ENCODE measurements at regions of chr5 and their contacts with region 1.

Region 1: DNA sequence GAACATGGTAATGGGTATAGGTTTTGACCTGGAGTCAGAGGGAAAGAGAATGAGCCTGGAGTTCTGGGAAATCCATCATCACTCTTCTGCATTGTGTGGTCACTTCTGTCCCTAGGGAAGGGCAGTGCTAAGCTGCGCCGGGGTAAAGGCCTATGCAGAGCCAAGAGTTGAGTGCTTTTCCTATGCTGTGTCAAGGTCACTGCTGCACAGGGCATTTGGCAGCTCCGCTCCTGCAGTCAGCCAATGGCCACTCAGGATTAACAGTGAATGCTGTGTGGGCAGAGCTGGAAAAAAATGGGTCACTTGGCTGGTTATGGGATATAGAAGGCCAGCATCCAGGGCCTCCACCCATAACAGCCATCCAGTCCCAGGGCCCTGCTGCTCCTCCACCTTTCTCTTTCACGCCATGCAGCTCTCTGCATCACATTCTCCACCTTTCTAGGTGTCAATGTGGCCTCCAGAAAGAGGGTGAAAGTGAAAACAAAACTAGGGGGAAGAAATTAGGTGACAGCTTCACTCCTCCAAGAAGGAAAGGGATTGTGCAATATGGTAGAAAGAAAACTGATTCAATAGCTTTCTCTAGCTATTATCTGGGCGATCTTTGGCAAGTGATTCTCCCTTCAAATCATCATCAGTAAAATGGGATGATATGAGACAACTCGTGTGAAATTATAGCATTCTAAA is 279.3 kb upstream of the ANKRD55 start:
- DNase-seq: peak in 1 of 2 donors; percentile 76
- H3K4me3 ChIP-seq: no peak overlapping the region
- H3K27ac ChIP-seq: no peak overlapping the region
- H3K4me1 ChIP-seq: peaks cover 0 to 12% of the 10 kb centered on the region in 2 donors
- H3K27me3 ChIP-seq: no peaks in the 10 kb centered on the region
- CTCF ChIP-seq: no peak

Region 2: DNA sequence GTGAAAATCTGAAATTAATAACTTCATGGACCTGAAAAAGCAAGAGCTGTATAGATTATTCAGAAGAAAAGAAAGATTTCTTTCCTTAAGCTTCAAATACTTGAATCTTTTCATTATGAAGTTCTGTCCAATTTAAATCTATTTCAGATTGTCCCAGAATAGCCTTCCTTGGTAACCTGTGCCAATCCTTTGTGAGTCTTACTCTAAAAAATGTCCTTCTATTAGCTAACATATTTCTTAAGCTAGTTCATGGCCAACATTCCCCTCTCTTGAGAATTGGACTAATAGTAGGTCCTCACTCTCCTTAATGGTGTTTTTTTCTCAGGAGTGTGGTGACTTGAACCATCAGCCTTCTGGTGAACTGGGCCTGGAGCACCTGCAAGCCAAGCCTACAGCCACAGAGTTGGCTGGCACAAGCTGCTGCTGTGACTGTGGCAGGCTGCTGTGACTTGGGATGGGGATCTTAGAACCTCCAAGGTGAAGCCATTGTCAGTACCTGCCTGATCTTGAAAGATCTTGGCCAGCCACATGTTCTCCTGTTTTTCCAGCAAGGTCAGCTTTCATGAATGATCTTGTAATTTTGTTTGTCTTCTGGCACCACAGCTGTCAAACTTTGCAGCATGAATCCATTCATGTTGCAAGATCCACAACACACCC is 40.3 kb after region 1 on chr5:
- intact Hi-C with region 1: loop called (anchors 5 kb)
- DNase-seq: no peak
- H3K4me3 ChIP-seq: no peak overlapping the region
- H3K27ac ChIP-seq: peak overlapping the region; percentile 19 to 45
- H3K4me1 ChIP-seq: peaks cover 0 to 14% of the 10 kb centered on the region in 2 donors
- H3K27me3 ChIP-seq: no peaks in the 10 kb centered on the region
- CTCF ChIP-seq: no peak

Region 3: GRCh38 chr5:56876327-56876726 is 363.9 kb after region 1 on chr5:
- intact Hi-C with region 1: no loop called
- DNase-seq: no peak
- H3K4me3 ChIP-seq: no peak overlapping the region
- H3K27ac ChIP-seq: no peak overlapping the region
- H3K4me1 ChIP-seq: no peaks in the 10 kb centered on the region
- H3K27me3 ChIP-seq: no peaks in the 10 kb centered on the region
- CTCF ChIP-seq: no peak

Measured in ascending aorta (tissue), 2 donors.